Mammary epithelial cell (primary cell): ENCODE measurements at regions of chr7 and their contacts with region 1.

Region 1: DNA sequence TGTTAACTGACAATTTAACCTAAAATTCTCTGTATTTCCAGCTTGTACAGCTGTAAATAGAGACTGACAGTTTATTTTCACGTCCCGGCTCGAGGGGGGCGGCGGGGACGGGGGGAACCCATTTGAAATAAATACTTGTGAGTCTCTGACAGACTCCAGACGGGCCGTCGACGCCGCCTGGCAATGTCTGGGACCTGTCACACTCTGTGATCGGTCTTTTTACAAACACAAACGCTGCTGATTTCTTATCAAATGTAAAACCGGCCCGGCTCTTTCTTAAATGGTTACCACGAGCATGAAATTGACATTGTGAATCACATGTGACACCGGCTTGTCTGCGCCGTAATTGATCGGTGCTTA is 57.0 kb downstream of the UNCX start:
- DNase-seq: no peak
- H3K4me3 ChIP-seq: no peak overlapping the region
- H3K27ac ChIP-seq: no peak overlapping the region
- H3K4me1 ChIP-seq: peaks cover 4% of the 10 kb centered on the region
- H3K27me3 ChIP-seq: peaks cover 6% of the 10 kb centered on the region
- CTCF ChIP-seq: no peak

Region 2: GRCh38 chr7:1323178-1324030 is 33.8 kb after region 1 on chr7:
- CTCF ChIA-PET with region 1: no interaction called
- dilution Hi-C with region 1: loop called (anchors 5 kb)
- in situ Hi-C with region 1: no loop called
- intact Hi-C with region 1: no loop called
- DNase-seq: no peak
- H3K4me3 ChIP-seq: no peak overlapping the region
- H3K27ac ChIP-seq: no peak overlapping the region
- H3K4me1 ChIP-seq: no peaks in the 10 kb centered on the region
- H3K27me3 ChIP-seq: peaks cover 14% of the 10 kb centered on the region
- CTCF ChIP-seq: no peak